ENCODE measurements at regions of chr11 and their contacts with region 1.

Region 1: GRCh38 chr11:66480117-66480938 is at the start of gene DPP3:
- DNase-seq: peak; percentile 100
- H3K4me3 ChIP-seq: peak within 1 kb of the TSS; percentile 68
- H3K4me3 Mint-ChIP-seq: peak within 1 kb of the TSS; percentile 89
- H3K27ac Mint-ChIP-seq: peak within 1 kb of the TSS; percentile 89
- H3K4me1 ChIP-seq: peaks cover 6% of the 10 kb centered on the region; the same call in 1 of the 2 replicates
- H3K4me1 Mint-ChIP-seq: peaks cover 24% of the 10 kb centered on the region
- H3K27me3 ChIP-seq: no peaks in the 10 kb centered on the region
- H3K27me3 Mint-ChIP-seq: no peaks in the 10 kb centered on the region
- CTCF ChIP-seq: no peak
- total RNA-seq, gene DPP3: 106 TPM in 2 replicates

Region 2: DNA sequence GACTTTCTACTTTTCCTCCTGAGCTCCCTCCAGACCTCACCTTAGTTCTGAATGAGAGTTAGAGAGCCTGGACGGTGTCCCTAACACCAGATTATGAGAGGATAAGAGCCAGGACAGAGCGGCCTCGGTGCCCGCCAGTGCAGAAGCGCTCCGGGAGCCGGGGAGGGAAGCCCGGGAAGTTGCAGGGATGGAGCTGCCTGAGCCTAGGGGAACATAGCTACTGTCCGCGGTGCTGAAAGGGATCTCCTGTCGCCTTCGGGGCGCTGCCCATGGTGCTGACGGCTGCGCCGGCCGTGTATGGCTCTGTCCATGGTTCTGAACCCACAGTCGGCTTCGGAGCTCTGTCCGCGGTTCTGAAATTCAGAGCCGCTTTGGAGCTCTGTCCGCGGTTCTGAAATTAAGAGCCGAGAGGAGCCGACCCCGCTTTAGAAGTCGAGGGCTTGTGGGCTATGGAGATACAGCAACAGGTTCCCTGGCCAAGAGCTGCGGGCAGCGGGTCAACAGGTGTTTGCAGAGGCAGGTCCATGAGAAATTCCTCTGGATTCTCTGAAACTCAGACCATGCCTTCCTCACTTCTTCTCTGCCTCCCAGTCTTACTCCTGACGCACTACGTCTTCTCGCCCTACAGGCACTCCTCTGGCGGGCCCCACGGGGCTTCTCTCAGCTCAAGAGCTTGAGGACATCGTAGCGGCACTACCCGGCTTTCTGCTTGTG is 58.7 kb before region 1 on chr11:
- CTCF ChIA-PET with region 1: interaction called, 13 read pairs
- POLR2A ChIA-PET with region 1: interaction called, 8 read pairs
- intact Hi-C with region 1: loop called (anchors 1 kb)
- DNase-seq: peak; percentile 92 to 96
- H3K4me3 ChIP-seq: no peak overlapping the region
- H3K4me3 Mint-ChIP-seq: no peak overlapping the region
- H3K27ac Mint-ChIP-seq: no peak overlapping the region
- H3K4me1 ChIP-seq: no peaks in the 10 kb centered on the region
- H3K4me1 Mint-ChIP-seq: peaks cover 14% of the 10 kb centered on the region
- H3K27me3 ChIP-seq: no peaks in the 10 kb centered on the region; the same call in 1 of the 2 replicates
- H3K27me3 Mint-ChIP-seq: peaks cover 9% of the 10 kb centered on the region
- CTCF ChIP-seq: no peak

Region 3: GRCh38 chr11:66438504-66439466 is 41.5 kb before region 1 on chr11 and contains the start of gene MRPL11:
- CTCF ChIA-PET with region 1: interaction called, 40 read pairs
- POLR2A ChIA-PET with region 1: interaction called, 34 read pairs
- intact Hi-C with region 1: loop called (anchors 1 kb)
- DNase-seq: peak; percentile 97 to 98
- H3K4me3 ChIP-seq: peak within 1 kb of the TSS; percentile 81
- H3K4me3 Mint-ChIP-seq: peak within 1 kb of the TSS; percentile 100
- H3K27ac Mint-ChIP-seq: peak within 1 kb of the TSS; percentile 100
- H3K4me1 ChIP-seq: peaks cover 17% of the 10 kb centered on the region
- H3K4me1 Mint-ChIP-seq: peaks cover 27% of the 10 kb centered on the region
- H3K27me3 ChIP-seq: no peaks in the 10 kb centered on the region
- H3K27me3 Mint-ChIP-seq: no peaks in the 10 kb centered on the region
- CTCF ChIP-seq: peak; percentile 79 to 96
- total RNA-seq, gene MRPL11: 201 and 206 TPM in 2 replicates

Region 4: DNA sequence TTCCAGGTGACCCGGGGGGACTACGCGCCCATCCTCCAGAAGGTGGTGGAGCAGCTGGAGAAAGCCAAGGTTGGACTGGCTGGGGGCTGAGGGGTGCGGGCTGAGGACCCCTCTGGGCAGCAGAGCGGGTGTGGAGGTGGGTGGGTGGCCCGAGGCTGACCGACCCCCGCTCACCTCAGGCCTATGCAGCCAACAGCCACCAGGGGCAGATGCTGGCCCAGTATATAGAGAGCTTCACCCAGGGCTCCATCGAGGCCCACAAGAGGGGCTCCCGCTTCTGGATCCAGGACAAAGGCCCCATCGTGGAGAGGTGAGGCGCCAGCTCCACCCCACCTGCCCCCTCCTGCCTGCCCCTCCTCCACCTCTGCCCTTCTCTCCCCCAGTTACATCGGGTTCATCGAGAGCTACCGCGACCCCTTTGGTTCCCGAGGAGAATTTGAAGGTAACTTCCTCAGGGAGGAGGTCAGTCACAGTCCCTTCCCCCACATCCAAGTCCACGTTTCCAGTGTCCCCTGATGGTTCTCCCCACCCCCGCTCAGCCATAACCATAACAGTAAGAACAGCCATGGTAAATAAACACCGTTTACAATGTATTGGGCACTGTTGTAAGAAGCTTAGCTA is 11.1 kb after region 1 on chr11:
- CTCF ChIA-PET with region 1: interaction called, 31 read pairs
- POLR2A ChIA-PET with region 1: interaction called, 3 read pairs
- intact Hi-C with region 1: no loop called
- DNase-seq: peak in 1 of 2 experiments; percentile 64
- H3K4me3 ChIP-seq: no peak overlapping the region
- H3K4me3 Mint-ChIP-seq: no peak overlapping the region
- H3K27ac Mint-ChIP-seq: no peak overlapping the region
- H3K4me1 ChIP-seq: peaks cover 14% of the 10 kb centered on the region; the same call in 1 of the 2 replicates
- H3K4me1 Mint-ChIP-seq: no peaks in the 10 kb centered on the region
- H3K27me3 ChIP-seq: no peaks in the 10 kb centered on the region
- H3K27me3 Mint-ChIP-seq: no peaks in the 10 kb centered on the region
- CTCF ChIP-seq: peak; percentile 77 to 92

Region 5: GRCh38 chr11:66545701-66546367 is 65.5 kb after region 1 on chr11 and contains the start of gene ZDHHC24:
- CTCF ChIA-PET with region 1: interaction called, 7 read pairs
- POLR2A ChIA-PET with region 1: interaction called, 20 read pairs
- intact Hi-C with region 1: loop called (anchors 1 kb)
- DNase-seq: peak; percentile 99
- H3K4me3 ChIP-seq: peak within 1 kb of the TSS; percentile 59
- H3K4me3 Mint-ChIP-seq: peak within 1 kb of the TSS; percentile 84
- H3K27ac Mint-ChIP-seq: peak within 1 kb of the TSS; percentile 60
- H3K4me1 ChIP-seq: peaks cover 22% of the 10 kb centered on the region
- H3K4me1 Mint-ChIP-seq: peaks cover 15% of the 10 kb centered on the region
- H3K27me3 ChIP-seq: no peaks in the 10 kb centered on the region
- H3K27me3 Mint-ChIP-seq: no peaks in the 10 kb centered on the region
- CTCF ChIP-seq: no peak
- total RNA-seq, gene ZDHHC24: 25.1 and 26.9 TPM in 2 replicates

Region 6: GRCh38 chr11:66638177-66639065 is 158.1 kb after region 1 on chr11 and contains the start of gene RBM4:
- CTCF ChIA-PET with region 1: interaction called, 12 read pairs
- POLR2A ChIA-PET with region 1: interaction called, 19 read pairs
- intact Hi-C with region 1: no loop called
- DNase-seq: peak; percentile 100
- H3K4me3 ChIP-seq: peak within 1 kb of the TSS; percentile 70
- H3K4me3 Mint-ChIP-seq: peak within 1 kb of the TSS; percentile 95
- H3K27ac Mint-ChIP-seq: peak within 1 kb of the TSS; percentile 99
- H3K4me1 ChIP-seq: peaks cover 31% of the 10 kb centered on the region
- H3K4me1 Mint-ChIP-seq: peaks cover 48% of the 10 kb centered on the region
- H3K27me3 ChIP-seq: no peaks in the 10 kb centered on the region
- H3K27me3 Mint-ChIP-seq: no peaks in the 10 kb centered on the region
- CTCF ChIP-seq: peak in 1 of 2 experiments; percentile 26
- total RNA-seq, gene RBM4: 257 and 273 TPM in 2 replicates